Activated CD4-positive, alpha-beta memory T cell treated with anti-CD3 and anti-CD28 coated beads, Interleukin-2, amount 10 ng/mL, durations not matched to agents 7 days and 5 days (primary cell): ENCODE measurements at regions of chr14 and their contacts with region 1.

Region 1: DNA sequence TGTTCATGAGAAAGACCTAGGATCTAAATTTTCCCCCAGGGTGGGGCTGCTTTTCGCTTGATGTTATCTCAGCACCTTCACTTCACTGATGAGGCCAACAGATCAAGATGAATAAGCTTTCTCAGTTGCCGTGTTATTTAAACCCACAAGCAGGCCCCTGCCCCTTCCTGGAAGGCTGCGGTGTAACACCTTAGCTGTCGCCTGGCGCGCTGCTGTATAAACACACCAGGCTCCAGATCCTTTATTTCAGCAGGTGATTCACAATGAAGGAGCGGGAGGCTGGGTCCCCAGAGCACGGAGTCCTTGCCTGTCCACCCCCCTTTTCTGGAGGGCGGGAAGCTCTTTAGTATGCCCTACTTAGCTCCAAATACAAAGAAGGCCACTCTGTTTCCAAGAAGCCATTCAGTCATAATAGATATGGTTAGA is 515.4 kb downstream of the FUT8 start:
- DNase-seq: peak; percentile 91
- H3K4me3 Mint-ChIP-seq: no peak overlapping the region
- H3K27ac Mint-ChIP-seq: peak overlapping the region; percentile 95
- H3K4me1 Mint-ChIP-seq: peaks cover 64% of the 10 kb centered on the region
- H3K27me3 Mint-ChIP-seq: peaks cover 2% of the 10 kb centered on the region

Region 2: GRCh38 chr14:65824285-65824977 is 103.5 kb before region 1 on chr14:
- CTCF ChIA-PET with region 1: interaction called, 12 read pairs
- POLR2A ChIA-PET with region 1: interaction called, 4 read pairs
- DNase-seq: peak; percentile 69
- H3K4me3 Mint-ChIP-seq: no peak overlapping the region
- H3K27ac Mint-ChIP-seq: no peak overlapping the region
- H3K4me1 Mint-ChIP-seq: peaks cover 14% of the 10 kb centered on the region
- H3K27me3 Mint-ChIP-seq: peaks cover 3% of the 10 kb centered on the region

Region 3: GRCh38 chr14:65860956-65861611 is 66.9 kb before region 1 on chr14:
- CTCF ChIA-PET with region 1: interaction called, 5 read pairs
- POLR2A ChIA-PET with region 1: interaction called, 23 read pairs
- DNase-seq: peak; percentile 72
- H3K4me3 Mint-ChIP-seq: peak overlapping the region; percentile 2
- H3K27ac Mint-ChIP-seq: peak overlapping the region; percentile 79
- H3K4me1 Mint-ChIP-seq: peaks cover 64% of the 10 kb centered on the region
- H3K27me3 Mint-ChIP-seq: no peaks in the 10 kb centered on the region

Region 4: DNA sequence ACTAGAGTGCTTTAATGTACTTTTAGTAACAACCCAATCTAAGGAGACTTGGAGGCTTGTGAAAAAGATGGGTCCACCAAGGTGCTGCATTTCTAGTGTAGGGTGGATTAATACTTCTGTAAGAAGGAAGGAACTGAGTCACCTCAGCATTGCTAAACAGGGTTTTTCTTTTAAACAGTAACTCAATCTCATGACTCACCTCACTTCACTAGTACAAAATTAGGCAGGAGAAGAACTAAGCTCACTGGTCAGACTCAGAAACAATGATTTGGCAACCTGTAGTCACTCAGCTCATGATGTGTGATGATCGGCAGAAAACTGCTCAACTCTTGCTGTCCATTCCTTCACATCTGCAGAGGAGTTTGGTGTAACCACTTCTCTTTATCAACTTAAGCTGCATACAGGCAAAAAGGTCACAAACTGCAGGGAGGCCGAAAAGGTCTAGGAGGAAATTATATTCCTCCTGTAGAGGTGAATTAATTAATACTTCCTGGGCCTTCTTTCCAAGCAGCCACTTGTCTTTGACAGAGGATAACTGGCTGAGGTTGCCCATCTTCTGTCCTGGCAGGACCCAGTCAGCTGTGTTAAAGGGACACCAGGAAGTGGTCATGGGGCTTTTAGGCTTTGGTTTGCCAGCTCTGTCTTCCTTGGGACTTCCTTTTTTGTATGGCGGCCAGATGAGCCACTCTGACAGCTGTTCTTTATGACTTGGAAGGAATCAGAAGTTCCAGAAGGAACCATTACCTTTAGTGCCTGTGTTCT is 48.5 kb before region 1 on chr14:
- CTCF ChIA-PET with region 1: interaction called, 7 read pairs
- POLR2A ChIA-PET with region 1: interaction called, 46 read pairs
- DNase-seq: peak; percentile 26
- H3K4me3 Mint-ChIP-seq: no peak overlapping the region
- H3K27ac Mint-ChIP-seq: peak overlapping the region; percentile 88
- H3K4me1 Mint-ChIP-seq: peaks cover 5% of the 10 kb centered on the region
- H3K27me3 Mint-ChIP-seq: no peaks in the 10 kb centered on the region

Region 5: DNA sequence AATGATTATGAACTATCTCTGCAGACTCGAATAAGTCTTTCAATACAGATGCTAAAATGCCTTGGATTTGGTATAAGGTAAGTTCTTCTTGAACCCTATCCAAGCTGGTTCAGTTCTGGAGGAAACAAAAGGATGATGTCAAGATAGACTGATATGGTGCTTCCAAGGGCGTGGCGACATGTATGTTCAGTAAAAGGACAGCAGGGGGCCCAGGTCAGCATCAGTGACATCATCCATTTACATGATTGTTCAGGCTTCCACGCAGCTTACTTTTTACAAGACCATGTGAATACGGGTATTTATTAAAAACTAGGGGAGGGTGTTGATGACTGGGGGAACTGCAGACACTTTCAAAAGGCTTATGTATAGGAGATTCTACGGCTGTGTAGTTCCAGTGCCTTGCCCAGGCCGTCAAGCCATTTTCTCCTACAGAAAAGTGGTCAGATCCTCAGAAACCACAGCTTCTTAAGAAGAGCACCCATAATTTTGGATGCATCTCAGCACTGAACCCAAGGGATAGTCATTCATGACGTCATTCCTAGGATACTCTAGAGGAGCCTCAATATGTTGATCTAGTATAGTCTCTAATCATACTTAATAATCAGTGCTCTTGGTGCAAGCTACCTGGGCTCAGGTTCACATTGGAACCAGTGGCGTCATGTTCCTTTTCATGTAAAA is 12.3 kb after region 1 on chr14:
- CTCF ChIA-PET with region 1: interaction called, 17 read pairs
- POLR2A ChIA-PET with region 1: interaction called, 39 read pairs
- DNase-seq: peak; percentile 34
- H3K4me3 Mint-ChIP-seq: no peak overlapping the region
- H3K27ac Mint-ChIP-seq: no peak overlapping the region
- H3K4me1 Mint-ChIP-seq: peaks cover 53% of the 10 kb centered on the region
- H3K27me3 Mint-ChIP-seq: no peaks in the 10 kb centered on the region

Region 6: GRCh38 chr14:65958664-65959562 is 31.0 kb after region 1 on chr14:
- CTCF ChIA-PET with region 1: interaction called, 46 read pairs
- POLR2A ChIA-PET with region 1: interaction called, 21 read pairs
- DNase-seq: no peak
- H3K4me3 Mint-ChIP-seq: no peak overlapping the region
- H3K27ac Mint-ChIP-seq: no peak overlapping the region
- H3K4me1 Mint-ChIP-seq: peaks cover 34% of the 10 kb centered on the region
- H3K27me3 Mint-ChIP-seq: no peaks in the 10 kb centered on the region

Region 7: GRCh38 chr14:65972891-65973290 is 44.9 kb after region 1 on chr14:
- CTCF ChIA-PET with region 1: no interaction called
- POLR2A ChIA-PET with region 1: no interaction called
- DNase-seq: no peak
- H3K4me3 Mint-ChIP-seq: no peak overlapping the region
- H3K27ac Mint-ChIP-seq: no peak overlapping the region
- H3K4me1 Mint-ChIP-seq: no peaks in the 10 kb centered on the region
- H3K27me3 Mint-ChIP-seq: peaks cover 11% of the 10 kb centered on the region